ENCODE measurements at regions of chr5 and their contacts with region 1.

Region 1: GRCh38 chr5:41856644-41857491 is 13.4 kb downstream of the OXCT1 start:
- DNase-seq: peak; percentile 91
- H3K4me3 Mint-ChIP-seq: no peak overlapping the region
- H3K27ac Mint-ChIP-seq: peak overlapping the region; percentile 6
- H3K4me1 Mint-ChIP-seq: peaks cover 12% of the 10 kb centered on the region
- H3K27me3 Mint-ChIP-seq: no peaks in the 10 kb centered on the region

Region 2: GRCh38 chr5:41903892-41904799 is 47.3 kb after region 1 on chr5 and contains the start of gene RIMOC1:
- intact Hi-C with region 1: loop called (anchors 1 kb)
- DNase-seq: peak; percentile 100
- H3K4me3 Mint-ChIP-seq: peak within 1 kb of the TSS; percentile 92
- H3K27ac Mint-ChIP-seq: peak within 1 kb of the TSS; percentile 96
- H3K4me1 Mint-ChIP-seq: peaks cover 43% of the 10 kb centered on the region
- H3K27me3 Mint-ChIP-seq: peaks cover 9% of the 10 kb centered on the region
- total RNA-seq, gene RIMOC1: 29.6 and 31.7 TPM in 2 replicates

Region 3: DNA sequence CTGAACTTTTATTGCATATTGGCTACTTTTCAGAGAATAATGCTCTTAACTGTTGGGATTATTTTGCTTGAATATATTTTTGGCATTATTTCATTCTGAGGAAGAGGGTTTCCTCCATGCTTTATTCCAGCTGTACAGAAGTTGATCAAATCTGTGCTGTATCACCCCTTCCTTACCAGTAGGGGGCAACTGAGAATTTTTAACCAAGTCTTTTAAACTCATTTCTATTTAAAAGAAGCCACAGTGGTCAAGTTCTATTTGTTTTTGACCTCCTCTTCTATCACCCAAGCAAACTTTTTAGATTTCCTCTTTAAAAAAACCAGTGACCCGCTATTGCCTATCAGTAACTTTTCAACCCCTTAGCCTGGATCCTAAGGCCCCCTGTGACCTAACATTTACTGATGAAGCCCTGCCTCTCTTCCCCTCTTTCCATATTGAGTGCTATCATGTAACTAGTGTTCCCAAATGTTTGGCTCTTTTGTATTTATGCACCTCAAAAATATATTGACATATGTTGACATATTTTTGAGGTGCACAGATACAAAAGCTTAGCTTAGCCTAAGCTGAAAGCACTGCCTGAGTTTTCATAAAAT is 148.8 kb after region 1 on chr5:
- intact Hi-C with region 1: loop called (anchors 5 kb)
- DNase-seq: no peak
- H3K4me3 Mint-ChIP-seq: no peak overlapping the region
- H3K27ac Mint-ChIP-seq: no peak overlapping the region
- H3K4me1 Mint-ChIP-seq: no peaks in the 10 kb centered on the region
- H3K27me3 Mint-ChIP-seq: peaks cover 6% of the 10 kb centered on the region

Region 4: GRCh38 chr5:42583322-42583721 is 726.5 kb after region 1 on chr5:
- intact Hi-C with region 1: loop called (anchors 5 kb)
- DNase-seq: peak; percentile 80
- H3K4me3 Mint-ChIP-seq: no peak overlapping the region
- H3K27ac Mint-ChIP-seq: no peak overlapping the region
- H3K4me1 Mint-ChIP-seq: no peaks in the 10 kb centered on the region
- H3K27me3 Mint-ChIP-seq: peaks cover 14% of the 10 kb centered on the region

Measured in activated CD4-positive, alpha-beta T cell treated with anti-CD3 and anti-CD28 coated beads, Interleukin-2, amount 10 ng/mL, durations not matched to agents 24 days and 14 days (primary cell).